Activated CD4-positive, alpha-beta T cell treated with anti-CD3 and anti-CD28 coated beads for 36 hours (primary cell): ENCODE measurements at regions of chr20 and their contacts with region 1.

Region 1: DNA sequence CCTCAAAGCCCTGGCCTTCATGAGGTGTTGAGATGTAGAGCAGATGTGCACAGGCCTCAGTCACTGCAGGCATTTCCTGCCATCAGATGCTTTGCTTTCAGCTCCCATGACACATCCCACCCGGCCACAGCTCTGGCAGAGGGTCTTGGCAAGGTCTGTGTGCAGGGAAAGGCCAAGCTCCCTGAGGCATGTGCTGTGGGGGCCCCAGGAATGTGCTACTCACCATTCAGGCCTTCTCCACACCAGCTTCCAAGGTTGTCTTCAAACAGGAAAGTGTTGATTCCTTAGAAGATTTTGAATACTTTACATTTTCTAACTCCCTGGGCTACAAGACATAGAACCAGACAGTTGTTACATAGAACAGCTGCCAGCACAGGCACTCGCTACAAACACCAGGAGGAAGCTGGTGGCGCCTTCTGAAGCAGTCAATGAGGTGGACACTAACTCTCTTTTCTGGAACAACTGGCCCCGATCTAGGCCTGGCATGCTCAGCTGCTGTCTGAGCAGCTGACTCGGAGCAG is 27.8 kb downstream of the CASS4 start:
- DNase-seq: peak; percentile 37
- ATAC-seq: peak; percentile 31
- H3K4me3 Mint-ChIP-seq: no peak overlapping the region
- H3K27ac Mint-ChIP-seq: peak overlapping the region; percentile 92
- H3K4me1 Mint-ChIP-seq: peaks cover 32% of the 10 kb centered on the region
- H3K27me3 Mint-ChIP-seq: no peaks in the 10 kb centered on the region

Region 2: DNA sequence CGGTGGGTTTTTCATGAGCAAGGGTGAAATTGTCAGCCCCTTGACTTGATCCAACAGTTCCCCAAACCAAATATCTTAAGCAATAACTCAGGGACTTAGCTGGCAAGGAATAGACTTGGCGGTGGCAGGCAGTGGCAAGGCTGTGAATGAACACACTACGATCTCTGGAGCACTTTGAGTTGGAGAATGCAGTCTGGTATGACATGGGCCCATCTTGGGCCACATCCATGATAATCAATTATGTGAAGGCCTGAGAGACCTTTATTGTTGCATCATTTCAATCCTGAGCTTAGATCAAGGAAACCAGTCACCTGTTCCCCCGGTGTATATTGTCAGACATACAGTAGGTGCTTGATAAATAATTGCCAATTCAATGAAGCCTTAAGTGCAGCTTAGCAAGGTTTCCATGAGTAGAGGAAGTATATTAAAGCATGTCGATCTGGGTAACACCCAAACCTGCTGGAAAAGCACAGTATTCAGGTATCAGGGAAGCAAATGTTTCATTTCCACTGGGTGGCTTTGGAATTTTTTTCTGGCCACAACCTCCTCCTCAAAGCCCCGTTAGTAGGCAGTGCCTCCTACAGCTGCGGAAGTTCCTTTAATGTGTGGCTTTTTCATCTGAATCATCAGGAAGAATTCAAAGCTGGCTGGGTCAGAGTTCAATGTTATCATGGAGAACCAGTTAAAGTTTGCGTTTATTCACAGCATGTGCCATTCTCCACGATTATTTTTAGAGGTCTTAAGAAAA is 17.6 kb before region 1 on chr20:
- CTCF ChIA-PET with region 1: interaction called, 6 read pairs
- POLR2A ChIA-PET with region 1: interaction called, 4 read pairs
- intact Hi-C with region 1: loop called in 1 of 2 experiments (anchors 2 kb)
- DNase-seq: no peak
- ATAC-seq: no peak
- H3K4me3 Mint-ChIP-seq: peak overlapping the region; percentile 42
- H3K27ac Mint-ChIP-seq: peak overlapping the region; percentile 85
- H3K4me1 Mint-ChIP-seq: peaks cover 65% of the 10 kb centered on the region
- H3K27me3 Mint-ChIP-seq: no peaks in the 10 kb centered on the region

Region 3: DNA sequence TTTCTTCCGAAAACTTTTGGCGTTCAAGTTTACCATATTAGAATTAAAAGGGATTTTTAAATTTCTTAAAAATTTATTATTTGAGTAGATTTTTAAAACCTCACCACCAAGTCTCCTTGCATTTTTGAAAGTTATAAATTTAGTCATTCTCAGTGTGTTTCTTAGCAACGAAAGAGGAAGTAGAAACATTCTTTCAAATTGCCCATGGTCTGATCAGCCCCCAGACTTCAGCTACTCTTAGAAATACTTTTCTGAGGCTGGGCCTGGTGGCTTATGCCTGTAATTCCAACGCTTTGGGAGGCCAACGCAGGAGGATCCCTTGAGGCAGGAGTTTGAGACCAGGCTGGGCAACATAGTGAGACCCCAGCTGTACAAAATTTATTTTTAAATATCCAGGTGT is 13.5 kb after region 1 on chr20:
- CTCF ChIA-PET with region 1: interaction called, 3 read pairs
- POLR2A ChIA-PET with region 1: interaction called, 4 read pairs
- intact Hi-C with region 1: loop called in 1 of 2 experiments (anchors 2 kb)
- DNase-seq: no peak
- ATAC-seq: no peak
- H3K4me3 Mint-ChIP-seq: no peak overlapping the region
- H3K27ac Mint-ChIP-seq: no peak overlapping the region
- H3K4me1 Mint-ChIP-seq: peaks cover 24% of the 10 kb centered on the region
- H3K27me3 Mint-ChIP-seq: no peaks in the 10 kb centered on the region